ENCODE measurements at regions of chr20 and their contacts with region 1.

Region 1: GRCh38 chr20:58481481-58482021 is 33.6 kb downstream of the APCDD1L start:
- DNase-seq: peak; percentile 59
- H3K4me3 ChIP-seq: peak overlapping the region in 1 of 4 donors; percentile 18
- H3K27ac ChIP-seq: peak overlapping the region in 2 of 4 donors; percentile 50 to 59
- H3K4me1 ChIP-seq: peaks cover 6 to 9% (median 8%) of the 10 kb centered on the region in 4 donors
- H3K27me3 ChIP-seq: no peaks in the 10 kb centered on the region
- CTCF ChIP-seq: peak; percentile 60 to 84 (median 70)
- EP300 ChIP-seq: no peak
- POLR2A ChIP-seq: no peak

Region 2: GRCh38 chr20:58839474-58839874 is 357.9 kb after region 1 on chr20:
- in situ Hi-C with region 1: loop called in 2 of 4 experiments (anchors 25 kb)
- intact Hi-C with region 1: no loop called
- DNase-seq: no peak
- H3K4me3 ChIP-seq: peak overlapping the region in 1 of 4 donors; percentile 13
- H3K27ac ChIP-seq: no peak overlapping the region
- H3K4me1 ChIP-seq: peaks cover 0 to 7% (median 3%) of the 10 kb centered on the region in 4 donors
- H3K27me3 ChIP-seq: peaks cover 55% of the 10 kb centered on the region
- CTCF ChIP-seq: peak in 4 of 5 experiments; percentile 17 to 26 (median 19)
- EP300 ChIP-seq: no peak
- POLR2A ChIP-seq: no peak

Region 3: GRCh38 chr20:58956106-58956505 is 474.6 kb after region 1 on chr20:
- in situ Hi-C with region 1: no loop called
- intact Hi-C with region 1: no loop called
- DNase-seq: no peak
- H3K4me3 ChIP-seq: no peak overlapping the region
- H3K27ac ChIP-seq: no peak overlapping the region
- H3K4me1 ChIP-seq: no peaks in the 10 kb centered on the region
- H3K27me3 ChIP-seq: no peaks in the 10 kb centered on the region
- CTCF ChIP-seq: no peak
- EP300 ChIP-seq: no peak
- POLR2A ChIP-seq: no peak

Measured in transverse colon (tissue), 4 donors.